Vagina (tissue), 2 donors: ENCODE measurements at regions of chr16 and their contacts with region 1.

Region 1: GRCh38 chr16:31032736-31033708 is at the start of gene STX4:
- DNase-seq: peak; percentile 99
- H3K4me3 ChIP-seq: peak within 1 kb of the TSS; percentile 65 to 94
- H3K27ac ChIP-seq: peak within 1 kb of the TSS; percentile 99
- H3K4me1 ChIP-seq: peaks cover 21% of the 10 kb centered on the region
- H3K27me3 ChIP-seq: no peaks in the 10 kb centered on the region
- CTCF ChIP-seq: peak in 1 of 3 experiments; percentile 5
- POLR2A ChIP-seq: peak in 1 of 2 donors; percentile 51
- total RNA-seq, gene STX4: 42.5 TPM

Region 2: GRCh38 chr16:30997000-30997886 is 35.8 kb before region 1 on chr16:
- intact Hi-C with region 1: loop called (anchors 2 kb)
- DNase-seq: no peak
- H3K4me3 ChIP-seq: peak overlapping the region; percentile 44 to 61
- H3K27ac ChIP-seq: peak overlapping the region; percentile 76
- H3K4me1 ChIP-seq: peaks cover 28% of the 10 kb centered on the region
- H3K27me3 ChIP-seq: no peaks in the 10 kb centered on the region
- CTCF ChIP-seq: no peak
- POLR2A ChIP-seq: peak in 1 of 2 donors; percentile 25

Region 3: DNA sequence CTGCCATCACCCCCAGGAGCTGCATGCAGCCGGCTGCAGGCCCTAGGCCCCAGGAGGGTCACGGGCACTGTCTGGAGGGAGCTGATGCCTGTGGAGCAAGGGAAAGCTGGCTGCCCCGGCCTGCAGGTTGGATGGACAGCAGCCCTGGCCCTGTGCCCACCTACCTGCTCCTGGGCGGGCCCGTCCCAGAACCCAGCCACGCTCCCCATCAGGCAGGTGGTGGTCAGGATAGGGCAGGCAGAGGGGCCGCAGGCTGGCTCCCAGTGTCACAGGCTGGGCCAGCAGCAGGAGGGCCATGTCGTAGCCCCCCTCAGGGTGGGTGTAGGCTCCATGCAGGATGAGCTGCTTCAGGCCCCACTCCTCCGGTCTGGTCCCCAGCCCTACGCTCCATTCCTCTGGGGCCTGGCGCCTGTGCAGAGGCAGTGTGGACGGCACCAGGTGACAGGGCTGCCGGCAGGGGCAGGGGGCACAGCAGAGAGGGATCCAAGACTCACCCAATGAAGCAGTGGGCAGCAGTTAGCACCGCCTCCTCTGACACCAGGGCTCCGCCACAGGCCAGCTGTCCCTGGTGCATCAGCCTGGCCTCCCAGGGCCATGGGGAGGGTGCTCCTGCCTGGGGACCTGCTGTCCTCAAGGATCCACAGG is 51.7 kb after region 1 on chr16:
- intact Hi-C with region 1: loop called (anchors 5 kb)
- DNase-seq: no peak
- H3K4me3 ChIP-seq: no peak overlapping the region
- H3K27ac ChIP-seq: no peak overlapping the region
- H3K4me1 ChIP-seq: peaks cover 13% of the 10 kb centered on the region
- H3K27me3 ChIP-seq: no peaks in the 10 kb centered on the region
- CTCF ChIP-seq: no peak
- POLR2A ChIP-seq: no peak

Region 4: GRCh38 chr16:31142109-31143010 is 109.3 kb after region 1 on chr16:
- intact Hi-C with region 1: loop called (anchors 5 kb)
- DNase-seq: peak; percentile 99 to 100
- H3K4me3 ChIP-seq: peak overlapping the region; percentile 51 to 70
- H3K27ac ChIP-seq: peak overlapping the region; percentile 87
- H3K4me1 ChIP-seq: peaks cover 39% of the 10 kb centered on the region
- H3K27me3 ChIP-seq: no peaks in the 10 kb centered on the region
- CTCF ChIP-seq: peak; percentile 96 to 97 (median 97)
- POLR2A ChIP-seq: peak in 1 of 2 donors; percentile 18